HEK293 (cell line): ENCODE measurements at regions of chr2 and their contacts with region 1.

Region 1: DNA sequence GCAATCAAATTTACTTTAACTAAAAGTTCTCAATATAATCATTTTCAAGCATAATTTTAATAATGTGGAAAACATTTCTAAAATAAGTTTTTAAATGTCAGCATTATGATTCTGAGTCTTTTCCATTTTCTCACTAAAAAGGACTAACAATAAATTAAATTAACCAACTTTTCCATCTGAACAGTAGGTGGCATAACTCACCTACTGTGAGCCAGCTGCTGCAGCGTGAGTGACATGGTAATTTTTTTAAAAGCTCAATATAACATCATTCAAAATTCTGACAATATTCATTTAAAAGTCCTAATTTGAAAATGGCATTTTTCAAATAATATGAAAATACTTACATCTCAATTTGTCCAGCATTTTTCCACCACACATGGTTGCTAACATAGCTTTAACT is 66.5 kb downstream of the DTNB start:
- H3K4me3 ChIP-seq: no peak overlapping the region
- H3K27ac ChIP-seq: no peak overlapping the region
- H3K4me1 ChIP-seq: 0 out of 2 replicates have a peak, but pooled peaks cover 3% of the 10 kb centered on the region
- CTCF ChIP-seq: no peak; the same call in 1 of the 2 replicates

Region 2: DNA sequence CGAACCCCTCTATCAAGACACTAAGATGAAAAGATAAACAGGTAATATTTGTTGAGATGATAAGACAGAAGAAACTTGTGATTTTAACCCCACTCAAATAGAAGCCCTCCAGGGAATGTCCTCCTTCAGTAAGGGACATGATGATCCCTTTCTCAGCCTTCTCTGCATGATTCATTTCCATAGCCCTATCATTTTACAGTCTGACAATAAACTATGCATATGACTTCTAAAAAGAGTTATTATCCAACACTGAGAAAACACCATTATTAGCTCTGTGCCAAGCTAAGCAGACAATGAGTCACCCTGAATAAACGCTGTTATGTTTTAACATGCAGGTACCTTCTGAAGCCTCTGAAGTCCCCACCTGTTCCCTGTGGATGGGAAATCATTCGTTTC is 11.7 kb after region 1 on chr2:
- CTCF ChIA-PET with region 1: interaction called, 15 read pairs
- POLR2A ChIA-PET with region 1: no interaction called
- H3K4me3 ChIP-seq: no peak overlapping the region
- H3K27ac ChIP-seq: peak overlapping the region; percentile 50
- H3K4me1 ChIP-seq: peaks cover 26% of the 10 kb centered on the region
- CTCF ChIP-seq: no peak

Region 3: DNA sequence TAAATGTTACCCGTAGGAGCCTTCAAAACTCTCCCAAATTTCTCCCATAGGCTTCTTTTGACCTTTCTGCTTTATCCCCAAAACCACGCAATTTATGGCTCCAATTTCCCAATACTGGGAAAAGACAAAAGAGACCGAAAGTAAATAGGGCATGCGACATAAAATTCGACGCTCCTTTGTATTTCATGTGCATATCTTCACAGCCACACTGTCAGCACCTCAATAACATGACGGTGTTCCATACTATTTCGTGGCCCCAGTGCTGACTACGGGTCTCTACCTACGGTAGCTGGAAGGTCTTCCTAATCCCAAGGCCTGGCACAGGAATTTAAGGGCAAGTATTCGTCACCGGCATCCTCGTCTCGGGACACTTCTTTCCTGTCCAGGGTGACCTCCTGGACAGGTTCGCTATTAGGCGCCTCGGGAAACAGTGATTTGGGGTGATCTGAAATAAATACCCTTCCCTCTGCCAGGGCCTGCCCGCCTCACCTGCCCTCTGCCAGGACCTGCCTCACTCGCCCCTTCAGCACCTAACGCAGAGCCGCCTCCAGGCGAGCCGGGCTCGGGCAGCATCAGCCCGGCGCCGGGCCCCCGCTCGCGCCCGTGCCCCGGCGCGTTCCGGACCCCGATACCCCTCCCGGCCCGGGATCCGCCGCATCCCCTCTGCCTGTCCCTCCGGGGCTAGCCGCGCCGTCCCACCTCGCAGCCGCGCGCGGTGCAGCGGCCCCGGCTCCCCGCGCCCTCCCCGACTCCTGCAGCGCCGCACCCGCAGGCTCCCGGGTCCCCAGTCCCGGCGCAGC is 65.8 kb after region 1 on chr2:
- CTCF ChIA-PET with region 1: interaction called, 175 read pairs
- POLR2A ChIA-PET with region 1: no interaction called
- H3K4me3 ChIP-seq: peak overlapping the region; percentile 81
- H3K27ac ChIP-seq: peak overlapping the region; percentile 87
- H3K4me1 ChIP-seq: peaks cover 12% of the 10 kb centered on the region; the same call in 1 of the 2 replicates
- CTCF ChIP-seq: 0 out of 2 replicates have a peak, but pooled peaks have one; percentile 6

Region 4: GRCh38 chr2:25690058-25690457 is 83.2 kb after region 1 on chr2:
- CTCF ChIA-PET with region 1: interaction called, 10 read pairs
- POLR2A ChIA-PET with region 1: no interaction called
- H3K4me3 ChIP-seq: no peak overlapping the region
- H3K27ac ChIP-seq: no peak overlapping the region
- H3K4me1 ChIP-seq: no peaks in the 10 kb centered on the region
- CTCF ChIP-seq: no peak

Region 5: DNA sequence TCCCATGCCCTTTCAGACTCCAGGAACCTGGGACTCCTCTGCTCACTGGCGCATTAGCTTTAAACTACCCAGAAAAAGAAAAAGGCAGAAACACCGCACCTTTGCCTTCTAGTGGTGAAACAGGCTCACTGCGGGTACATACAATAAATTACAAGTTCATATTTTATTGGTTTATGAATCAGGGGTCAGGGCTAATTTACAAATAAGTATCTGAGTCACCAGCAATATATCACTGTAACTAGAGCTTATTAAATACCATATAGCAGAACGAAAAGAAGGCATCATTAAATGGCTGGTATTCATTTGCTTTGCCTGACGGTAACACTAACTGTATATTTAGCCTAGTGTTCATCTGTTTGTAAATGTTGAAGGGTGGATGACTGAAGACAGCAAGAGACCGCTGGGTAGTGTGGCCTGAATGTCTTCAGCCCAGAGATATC is 93.3 kb after region 1 on chr2:
- CTCF ChIA-PET with region 1: interaction called, 82 read pairs
- POLR2A ChIA-PET with region 1: interaction called, 5 read pairs
- H3K4me3 ChIP-seq: no peak overlapping the region
- H3K27ac ChIP-seq: no peak overlapping the region
- H3K4me1 ChIP-seq: peaks cover 12% of the 10 kb centered on the region
- CTCF ChIP-seq: no peak

Region 6: DNA sequence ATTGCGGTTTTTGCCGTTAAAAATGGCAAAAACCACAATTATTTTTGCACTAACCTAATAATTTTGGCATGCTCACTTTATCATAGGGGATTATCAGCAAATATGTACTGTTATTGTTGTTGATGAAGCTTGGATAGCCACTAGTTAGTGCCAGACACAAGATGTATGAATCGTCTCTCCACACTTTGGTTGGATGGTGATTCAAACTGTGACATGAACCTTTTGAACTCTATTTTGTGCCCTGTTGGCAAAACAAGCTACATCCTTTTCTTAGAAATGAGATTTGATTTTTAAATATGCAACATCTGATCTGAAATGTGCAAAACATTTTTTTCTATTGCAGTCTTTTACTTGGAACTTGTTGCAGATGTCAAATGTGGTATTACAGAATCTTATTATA is 115.3 kb after region 1 on chr2:
- CTCF ChIA-PET with region 1: interaction called, 15 read pairs
- POLR2A ChIA-PET with region 1: no interaction called
- H3K4me3 ChIP-seq: no peak overlapping the region
- H3K27ac ChIP-seq: no peak overlapping the region
- H3K4me1 ChIP-seq: no peaks in the 10 kb centered on the region
- CTCF ChIP-seq: no peak

Region 7: GRCh38 chr2:25867396-25868003 is 260.6 kb after region 1 on chr2:
- CTCF ChIA-PET with region 1: no interaction called
- POLR2A ChIA-PET with region 1: no interaction called
- H3K4me3 ChIP-seq: no peak overlapping the region
- H3K27ac ChIP-seq: no peak overlapping the region
- H3K4me1 ChIP-seq: no peaks in the 10 kb centered on the region
- CTCF ChIP-seq: no peak